Activated CD4-positive, alpha-beta memory T cell treated with anti-CD3 and anti-CD28 coated beads, Interleukin-2, amount 10 ng/mL, durations not matched to agents 7 days and 5 days (primary cell): ENCODE measurements at regions of chr11 and their contacts with region 1.

Region 1: DNA sequence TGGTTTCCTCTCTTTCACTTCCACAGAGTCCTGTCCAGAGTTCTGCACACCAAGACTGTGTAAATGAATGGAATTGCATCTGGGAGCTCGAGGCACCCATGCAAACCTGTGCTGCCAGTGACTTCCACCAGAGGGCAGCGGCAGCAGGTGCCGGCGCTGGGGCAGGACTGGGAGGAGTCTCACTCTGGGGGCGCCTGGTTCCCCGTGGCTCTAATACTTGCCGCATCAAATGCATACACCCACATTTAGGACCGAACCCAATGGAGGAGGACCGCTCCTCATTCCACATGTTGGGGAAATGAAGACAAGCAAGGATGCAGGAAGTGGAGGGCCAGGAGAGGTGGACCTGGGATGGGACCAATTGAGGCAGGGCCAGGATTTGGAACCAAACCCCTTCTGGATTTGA is 1.1 kb upstream of the CD6 start:
- DNase-seq: peak; percentile 85
- H3K4me3 Mint-ChIP-seq: peak overlapping the region; percentile 88
- H3K27ac Mint-ChIP-seq: peak overlapping the region; percentile 50
- H3K4me1 Mint-ChIP-seq: peaks cover 26% of the 10 kb centered on the region
- H3K27me3 Mint-ChIP-seq: peaks cover 12% of the 10 kb centered on the region

Region 2: GRCh38 chr11:60836866-60837515 is 133.4 kb before region 1 on chr11:
- CTCF ChIA-PET with region 1: no interaction called
- POLR2A ChIA-PET with region 1: no interaction called
- DNase-seq: no peak
- H3K4me3 Mint-ChIP-seq: no peak overlapping the region
- H3K27ac Mint-ChIP-seq: peak overlapping the region; percentile 18
- H3K4me1 Mint-ChIP-seq: peaks cover 61% of the 10 kb centered on the region
- H3K27me3 Mint-ChIP-seq: peaks cover 4% of the 10 kb centered on the region

Region 3: DNA sequence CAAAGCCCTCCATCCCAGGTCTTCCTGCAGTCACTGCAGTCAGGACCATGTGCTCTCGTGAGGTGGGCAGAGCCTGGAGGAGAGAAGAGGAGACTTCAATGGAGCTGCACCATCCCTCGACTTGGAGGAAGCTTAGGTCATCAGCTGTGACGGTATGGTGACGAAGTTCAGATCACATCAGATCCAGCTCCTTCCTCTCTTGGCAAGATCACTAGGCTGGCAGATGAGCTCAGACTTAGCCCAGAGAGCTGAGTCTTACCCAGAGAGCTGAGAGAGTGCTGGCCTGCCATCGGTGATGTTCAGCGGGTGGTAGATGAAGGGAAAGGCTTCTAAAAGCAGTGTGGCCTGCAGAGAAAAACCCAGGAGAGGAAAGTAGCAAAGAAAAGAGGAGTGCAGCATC is 16.6 kb before region 1 on chr11:
- CTCF ChIA-PET with region 1: interaction called, 12 read pairs
- POLR2A ChIA-PET with region 1: no interaction called
- DNase-seq: no peak
- H3K4me3 Mint-ChIP-seq: no peak overlapping the region
- H3K27ac Mint-ChIP-seq: no peak overlapping the region
- H3K4me1 Mint-ChIP-seq: peaks cover 17% of the 10 kb centered on the region
- H3K27me3 Mint-ChIP-seq: peaks cover 33% of the 10 kb centered on the region

Region 4: GRCh38 chr11:60992842-60993409 is 22.6 kb after region 1 on chr11:
- CTCF ChIA-PET with region 1: interaction called, 27 read pairs
- POLR2A ChIA-PET with region 1: no interaction called
- DNase-seq: no peak
- H3K4me3 Mint-ChIP-seq: peak overlapping the region; percentile 63
- H3K27ac Mint-ChIP-seq: peak overlapping the region; percentile 81
- H3K4me1 Mint-ChIP-seq: peaks cover 82% of the 10 kb centered on the region
- H3K27me3 Mint-ChIP-seq: no peaks in the 10 kb centered on the region

Region 5: GRCh38 chr11:61021661-61022212 is 51.4 kb after region 1 on chr11:
- CTCF ChIA-PET with region 1: interaction called, 7 read pairs
- POLR2A ChIA-PET with region 1: interaction called, 16 read pairs
- DNase-seq: peak; percentile 83
- H3K4me3 Mint-ChIP-seq: peak overlapping the region; percentile 59
- H3K27ac Mint-ChIP-seq: peak overlapping the region; percentile 91
- H3K4me1 Mint-ChIP-seq: peaks cover 74% of the 10 kb centered on the region
- H3K27me3 Mint-ChIP-seq: no peaks in the 10 kb centered on the region

Region 6: GRCh38 chr11:61187505-61188130 is 217.2 kb after region 1 on chr11:
- CTCF ChIA-PET with region 1: interaction called, 40 read pairs
- POLR2A ChIA-PET with region 1: no interaction called
- DNase-seq: peak; percentile 80
- H3K4me3 Mint-ChIP-seq: no peak overlapping the region
- H3K27ac Mint-ChIP-seq: no peak overlapping the region
- H3K4me1 Mint-ChIP-seq: peaks cover 4% of the 10 kb centered on the region
- H3K27me3 Mint-ChIP-seq: peaks cover 10% of the 10 kb centered on the region

Region 7: GRCh38 chr11:61581030-61581928 is 610.9 kb after region 1 on chr11 and contains the start of gene SYT7:
- CTCF ChIA-PET with region 1: no interaction called
- POLR2A ChIA-PET with region 1: no interaction called
- DNase-seq: peak; percentile 92
- H3K4me3 Mint-ChIP-seq: peak within 1 kb of the TSS; percentile 68
- H3K27ac Mint-ChIP-seq: no peak within 1 kb of the TSS
- H3K4me1 Mint-ChIP-seq: peaks cover 11% of the 10 kb centered on the region
- H3K27me3 Mint-ChIP-seq: peaks cover 55% of the 10 kb centered on the region
- total RNA-seq, gene SYT7: not detected